MCF 10A (cell line): ENCODE measurements at regions of chr6 and their contacts with region 1.

Region 1: DNA sequence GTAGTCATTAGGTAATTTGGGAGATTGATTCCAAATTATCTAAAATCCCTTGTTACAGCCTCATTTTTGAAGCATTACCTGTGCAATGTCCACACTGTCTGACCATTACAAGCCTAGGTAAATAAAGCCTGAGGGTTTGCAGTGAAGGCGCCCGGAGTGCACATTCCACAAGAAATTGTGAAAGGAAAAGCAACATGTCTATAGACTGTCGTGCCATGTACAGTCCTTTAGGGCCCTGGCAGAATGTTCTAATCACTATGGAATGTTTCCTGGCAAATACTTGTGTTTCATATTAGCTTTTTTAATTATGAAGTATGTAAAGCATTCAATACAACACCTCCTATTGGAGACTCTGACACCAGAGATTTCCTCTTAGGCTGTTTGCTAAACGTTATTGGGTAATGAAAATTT is 28.9 kb downstream of the PREP start:
- DNase-seq: peak; percentile 71
- H3K4me3 Mint-ChIP-seq: peak overlapping the region; percentile 52
- H3K27ac Mint-ChIP-seq: peak overlapping the region; percentile 95
- H3K4me1 Mint-ChIP-seq: peaks cover 38% of the 10 kb centered on the region
- H3K27me3 Mint-ChIP-seq: no peaks in the 10 kb centered on the region
- CTCF ChIP-seq: no peak

Region 2: DNA sequence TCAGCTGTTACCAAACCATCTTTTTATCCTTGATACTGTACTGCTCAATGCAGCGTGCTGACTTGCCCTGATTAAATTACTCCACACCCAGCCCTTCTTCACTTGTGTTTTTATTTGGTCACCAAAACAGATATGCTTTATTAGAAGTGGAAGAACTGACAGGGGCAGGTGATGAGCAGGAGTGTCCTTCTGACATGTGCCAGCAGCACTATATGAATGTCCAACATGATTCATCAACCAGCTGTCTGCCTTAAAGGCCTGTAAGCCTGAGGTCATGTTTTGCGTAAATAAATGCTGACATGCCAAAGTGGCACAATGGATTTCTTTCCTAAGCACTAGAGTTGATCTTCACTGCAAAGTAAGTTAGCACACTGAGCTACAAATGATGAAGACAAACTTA is 209.6 kb before region 1 on chr6:
- CTCF ChIA-PET with region 1: no interaction called
- POLR2A ChIA-PET with region 1: interaction called, 10 read pairs
- intact Hi-C with region 1: no loop called
- DNase-seq: peak; percentile 57
- H3K4me3 Mint-ChIP-seq: no peak overlapping the region
- H3K27ac Mint-ChIP-seq: no peak overlapping the region
- H3K4me1 Mint-ChIP-seq: peaks cover 10% of the 10 kb centered on the region
- H3K27me3 Mint-ChIP-seq: no peaks in the 10 kb centered on the region
- CTCF ChIP-seq: no peak

Region 3: DNA sequence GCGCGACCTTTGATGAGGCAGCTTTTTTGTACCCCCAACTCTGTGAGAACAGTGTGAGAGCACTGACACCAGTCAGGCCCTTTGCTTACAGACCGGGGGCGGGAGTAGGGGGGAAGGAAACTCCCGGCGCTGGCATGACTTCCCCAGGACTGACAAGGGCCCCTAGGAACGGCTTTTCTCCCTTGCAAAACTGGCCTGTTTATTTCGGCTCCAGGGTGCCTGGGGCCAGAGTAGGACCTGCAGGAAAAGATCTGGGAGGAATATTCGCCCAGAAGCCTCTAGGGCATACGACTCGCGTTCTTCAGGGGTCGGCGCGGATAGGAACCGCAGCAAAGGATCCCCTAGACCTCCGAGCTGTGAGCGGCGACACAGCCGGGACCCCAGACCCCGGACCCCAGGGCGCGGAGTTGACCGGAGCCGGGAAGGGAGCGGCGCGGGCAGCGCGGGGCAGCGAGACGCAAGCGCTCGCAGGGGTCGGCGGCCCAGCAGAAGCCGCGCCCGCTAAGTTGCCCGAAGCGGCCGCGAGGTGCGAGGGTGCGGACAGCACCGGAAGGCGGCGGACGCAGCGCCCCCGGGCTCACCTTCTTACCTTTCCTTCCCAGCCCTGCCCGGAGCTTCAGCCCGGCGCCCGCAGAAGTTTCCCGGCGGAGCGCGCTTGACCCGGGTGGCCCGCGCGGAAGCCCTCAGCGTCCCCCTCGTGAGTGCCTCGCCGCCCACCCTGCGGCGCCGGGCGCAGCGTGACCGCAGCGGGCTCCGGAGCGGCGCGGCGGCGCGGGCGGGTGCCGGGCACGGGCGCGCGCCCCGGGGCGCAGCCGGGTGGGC is 194.6 kb before region 1 on chr6 and contains the start of gene POPDC3:
- CTCF ChIA-PET with region 1: interaction called, 3 read pairs
- POLR2A ChIA-PET with region 1: interaction called, 15 read pairs
- intact Hi-C with region 1: no loop called
- DNase-seq: peak; percentile 56
- H3K4me3 Mint-ChIP-seq: peak within 1 kb of the TSS; percentile 72
- H3K27ac Mint-ChIP-seq: peak within 1 kb of the TSS; percentile 69
- H3K4me1 Mint-ChIP-seq: peaks cover 16% of the 10 kb centered on the region
- H3K27me3 Mint-ChIP-seq: no peaks in the 10 kb centered on the region
- CTCF ChIP-seq: no peak
- total RNA-seq, gene POPDC3: 7.3 and 7.9 TPM in 2 replicates

Region 4: DNA sequence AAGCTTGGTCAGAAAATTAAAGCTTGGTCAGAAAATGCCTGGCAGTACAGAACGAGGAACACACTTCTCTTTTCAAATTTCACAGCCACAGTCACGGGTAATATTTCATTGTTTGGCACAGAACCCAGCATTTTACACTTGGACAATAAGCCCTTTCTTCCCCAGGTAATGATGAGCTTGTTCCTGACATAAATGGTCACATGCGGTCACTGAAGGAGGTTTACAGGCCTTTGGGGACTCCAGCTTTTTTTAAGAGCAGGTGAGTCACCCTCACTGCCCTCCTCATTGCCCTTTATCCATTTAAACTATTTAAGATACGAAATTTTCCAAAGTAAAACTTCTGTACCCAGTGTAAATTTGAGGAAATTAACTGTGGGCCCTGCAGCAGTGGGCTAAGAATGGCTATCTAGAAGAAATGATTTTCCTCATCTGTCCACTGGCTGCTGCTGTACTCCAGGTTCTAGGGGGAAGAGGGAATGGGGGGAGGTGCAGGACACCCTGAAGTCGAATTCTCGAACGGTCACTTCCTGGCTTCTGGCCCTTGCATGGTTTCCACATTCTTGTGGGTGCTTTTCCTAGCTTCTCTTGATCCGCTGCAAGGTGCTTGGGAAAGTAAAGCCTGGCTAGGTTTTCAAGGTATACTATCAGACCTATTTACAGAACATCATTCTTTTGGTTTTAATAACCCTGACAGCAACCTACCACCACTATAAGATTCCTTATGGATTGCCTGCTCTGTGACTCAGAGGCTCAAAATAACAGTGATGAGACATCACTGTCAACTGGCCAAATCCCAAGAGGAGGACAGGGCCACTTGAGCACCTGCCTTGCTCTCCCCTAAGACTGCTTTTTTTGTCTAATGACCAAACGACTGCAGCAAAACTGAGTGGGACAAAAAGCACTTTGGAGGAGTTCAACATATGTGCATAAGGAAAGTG is 46.9 kb before region 1 on chr6:
- CTCF ChIA-PET with region 1: interaction called, 3 read pairs
- POLR2A ChIA-PET with region 1: interaction called, 12 read pairs
- intact Hi-C with region 1: no loop called
- DNase-seq: peak; percentile 77
- H3K4me3 Mint-ChIP-seq: no peak overlapping the region
- H3K27ac Mint-ChIP-seq: peak overlapping the region; percentile 58
- H3K4me1 Mint-ChIP-seq: peaks cover 30% of the 10 kb centered on the region
- H3K27me3 Mint-ChIP-seq: no peaks in the 10 kb centered on the region
- CTCF ChIP-seq: no peak

Region 5: GRCh38 chr6:105346052-105346451 is 28.0 kb before region 1 on chr6:
- CTCF ChIA-PET with region 1: no interaction called
- POLR2A ChIA-PET with region 1: interaction called, 27 read pairs
- intact Hi-C with region 1: no loop called
- DNase-seq: peak; percentile 56
- H3K4me3 Mint-ChIP-seq: no peak overlapping the region
- H3K27ac Mint-ChIP-seq: peak overlapping the region; percentile 67
- H3K4me1 Mint-ChIP-seq: peaks cover 11% of the 10 kb centered on the region
- H3K27me3 Mint-ChIP-seq: no peaks in the 10 kb centered on the region
- CTCF ChIP-seq: no peak

Region 6: GRCh38 chr6:105363100-105363754 is 10.8 kb before region 1 on chr6:
- CTCF ChIA-PET with region 1: interaction called, 46 read pairs
- POLR2A ChIA-PET with region 1: interaction called, 114 read pairs
- intact Hi-C with region 1: no loop called
- DNase-seq: peak; percentile 51
- H3K4me3 Mint-ChIP-seq: no peak overlapping the region
- H3K27ac Mint-ChIP-seq: peak overlapping the region; percentile 78
- H3K4me1 Mint-ChIP-seq: peaks cover 42% of the 10 kb centered on the region
- H3K27me3 Mint-ChIP-seq: no peaks in the 10 kb centered on the region
- CTCF ChIP-seq: peak; percentile 36

Region 7: DNA sequence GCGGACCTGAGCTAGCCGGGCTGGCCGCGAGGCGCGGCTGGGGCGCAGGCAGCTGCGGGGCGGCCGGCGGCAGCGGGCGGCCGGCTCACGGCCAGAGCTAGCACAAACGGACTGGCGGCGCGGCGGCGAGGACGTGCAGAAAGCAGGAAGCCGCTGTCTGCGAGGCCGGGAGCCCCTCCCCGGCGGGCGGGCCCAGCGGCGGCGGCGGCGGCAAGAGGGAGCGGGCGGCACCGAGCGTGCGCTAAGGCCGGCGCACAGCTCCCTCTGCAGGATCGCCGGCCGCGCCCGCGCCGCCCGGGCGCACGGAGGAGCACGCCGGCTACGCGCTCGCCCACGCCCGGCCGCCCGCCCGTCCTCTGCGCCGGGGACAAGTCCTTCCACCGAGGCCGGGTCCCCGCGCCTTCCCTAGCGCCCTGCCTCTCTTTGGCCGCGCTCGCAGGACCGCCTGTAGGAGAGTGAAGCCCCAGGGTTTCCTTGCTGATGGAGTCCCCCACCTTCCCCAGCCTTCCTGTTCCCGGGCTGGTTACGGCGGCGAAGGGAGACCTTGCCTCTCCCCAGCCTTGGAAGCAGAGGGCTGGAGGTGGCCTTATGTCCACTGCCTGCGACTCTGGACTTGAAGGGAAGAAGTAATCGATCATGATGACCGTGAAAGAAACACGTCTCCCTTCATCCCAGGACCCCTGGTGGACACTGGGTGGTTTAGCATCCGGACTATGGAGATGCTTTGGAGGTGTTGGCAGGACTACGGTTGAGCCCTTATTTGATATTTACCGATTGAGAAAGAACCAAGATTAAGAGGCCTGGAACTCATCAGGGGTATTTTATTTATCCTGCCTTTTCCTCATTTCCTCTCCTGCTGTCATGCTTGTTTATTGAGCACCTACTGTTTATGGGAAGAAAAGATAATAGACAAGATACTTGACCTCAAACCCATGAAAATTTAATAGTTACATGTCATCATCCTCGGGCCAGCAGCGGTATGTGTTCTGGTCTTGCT is 29.2 kb after region 1 on chr6 and contains the start of gene PREP:
- CTCF ChIA-PET with region 1: interaction called, 38 read pairs
- POLR2A ChIA-PET with region 1: interaction called, 160 read pairs
- intact Hi-C with region 1: no loop called
- DNase-seq: peak; percentile 85
- H3K4me3 Mint-ChIP-seq: peak within 1 kb of the TSS; percentile 82
- H3K27ac Mint-ChIP-seq: peak within 1 kb of the TSS; percentile 65
- H3K4me1 Mint-ChIP-seq: peaks cover 28% of the 10 kb centered on the region
- H3K27me3 Mint-ChIP-seq: no peaks in the 10 kb centered on the region
- CTCF ChIP-seq: peak; percentile 60
- total RNA-seq, gene PREP: 57.8 and 67.6 TPM in 2 replicates